OCI-LY7 (cell line): ENCODE measurements at regions of chr1 and their contacts with region 1.

Region 1: DNA sequence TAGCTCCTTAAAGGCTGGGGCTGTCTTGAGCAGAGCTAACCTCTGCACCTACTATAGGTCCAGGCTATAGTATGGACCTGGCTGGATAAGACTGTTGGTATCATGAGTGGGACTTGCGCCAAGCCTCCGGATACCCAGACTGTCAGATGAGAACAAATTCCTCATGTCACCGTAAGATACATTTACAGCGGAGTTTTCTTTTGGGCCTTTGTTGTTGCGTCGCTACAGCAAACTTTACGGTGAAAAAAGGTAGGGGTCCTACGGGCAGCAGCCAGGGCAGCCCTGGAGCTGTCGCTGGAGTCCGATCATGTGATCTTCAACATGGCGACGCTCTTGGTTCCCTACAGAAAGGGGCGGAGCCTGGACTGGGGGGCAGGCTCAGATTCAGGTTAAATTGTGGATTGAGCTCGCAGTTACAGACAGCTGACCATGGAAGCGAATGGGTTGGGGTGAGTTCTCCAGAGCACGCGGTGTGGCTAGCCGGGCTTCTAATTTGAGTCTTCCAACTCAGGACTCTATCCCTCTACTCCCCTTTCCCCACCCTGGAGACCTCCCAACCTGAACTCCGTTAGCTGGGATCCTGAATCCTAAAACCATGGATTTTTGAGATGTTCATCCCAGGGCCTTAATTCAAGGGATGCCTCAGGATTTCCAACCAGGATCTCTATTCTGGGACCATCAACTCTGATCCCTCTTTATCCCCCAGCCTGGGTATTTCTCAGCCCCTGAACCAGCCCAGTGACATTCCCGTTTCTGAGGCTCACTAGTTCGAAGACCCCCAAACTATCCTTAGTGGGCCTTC is at the start of gene UROD:
- DNase-seq: peak; percentile 97
- H3K4me3 ChIP-seq: peak within 1 kb of the TSS; percentile 83
- H3K27ac ChIP-seq: peak within 1 kb of the TSS; percentile 49
- H3K4me1 ChIP-seq: peaks cover 20% of the 10 kb centered on the region
- CTCF ChIP-seq: no peak
- total RNA-seq, gene UROD: 57.4 and 73.5 TPM in 2 replicates

Region 2: GRCh38 chr1:44792783-44793714 is 219.0 kb before region 1 on chr1:
- CTCF ChIA-PET with region 1: interaction called, 3 read pairs
- POLR2A ChIA-PET with region 1: interaction called, 4 read pairs
- intact Hi-C with region 1: loop called (anchors 2 kb)
- DNase-seq: no peak
- H3K4me3 ChIP-seq: no peak overlapping the region
- H3K27ac ChIP-seq: no peak overlapping the region
- H3K4me1 ChIP-seq: no peaks in the 10 kb centered on the region
- CTCF ChIP-seq: no peak

Region 3: GRCh38 chr1:44835738-44836675 is 176.0 kb before region 1 on chr1:
- CTCF ChIA-PET with region 1: no interaction called
- POLR2A ChIA-PET with region 1: no interaction called
- intact Hi-C with region 1: loop called (anchors 2 kb)
- DNase-seq: peak; percentile 77
- H3K4me3 ChIP-seq: no peak overlapping the region
- H3K27ac ChIP-seq: no peak overlapping the region
- H3K4me1 ChIP-seq: no peaks in the 10 kb centered on the region
- CTCF ChIP-seq: peak; percentile 94

Region 4: DNA sequence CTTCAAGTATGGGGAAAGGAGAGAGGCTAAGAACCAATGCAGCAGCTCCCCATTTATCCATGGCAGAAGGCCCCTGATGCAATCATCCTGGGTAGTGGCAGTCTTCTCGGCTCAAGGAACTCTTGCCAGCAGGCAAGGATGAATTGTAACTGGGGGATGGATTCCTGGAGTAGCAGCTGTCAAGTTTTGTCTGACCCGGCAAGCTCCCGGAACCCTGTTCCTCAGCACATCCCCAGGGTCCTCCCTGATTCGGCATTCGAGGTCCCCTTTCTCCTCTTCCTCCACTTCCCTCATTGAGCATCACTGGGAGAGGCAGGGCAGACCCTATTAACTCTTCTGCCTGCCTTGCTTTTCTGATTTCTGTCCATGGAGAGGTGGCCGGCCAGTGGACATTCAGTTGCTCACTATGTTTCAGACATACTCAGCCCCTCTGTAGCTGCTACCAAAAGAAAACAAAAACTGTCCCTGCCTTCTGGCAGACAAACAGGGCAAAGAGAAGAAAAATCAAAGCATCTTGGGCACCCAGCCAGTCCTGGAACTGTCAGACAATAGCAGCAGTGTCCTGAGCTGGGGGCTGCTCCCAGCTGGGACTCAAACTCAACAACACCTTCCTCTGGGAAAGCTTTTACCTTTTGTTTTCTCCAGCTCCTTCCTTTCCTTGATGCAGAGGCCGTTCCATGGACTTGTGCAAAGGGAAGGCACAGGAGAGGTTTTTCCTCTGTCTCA is 163.4 kb before region 1 on chr1:
- CTCF ChIA-PET with region 1: interaction called, 17 read pairs
- POLR2A ChIA-PET with region 1: no interaction called
- intact Hi-C with region 1: no loop called
- DNase-seq: no peak
- H3K4me3 ChIP-seq: no peak overlapping the region
- H3K27ac ChIP-seq: no peak overlapping the region
- H3K4me1 ChIP-seq: peaks cover 9% of the 10 kb centered on the region
- CTCF ChIP-seq: no peak

Region 5: DNA sequence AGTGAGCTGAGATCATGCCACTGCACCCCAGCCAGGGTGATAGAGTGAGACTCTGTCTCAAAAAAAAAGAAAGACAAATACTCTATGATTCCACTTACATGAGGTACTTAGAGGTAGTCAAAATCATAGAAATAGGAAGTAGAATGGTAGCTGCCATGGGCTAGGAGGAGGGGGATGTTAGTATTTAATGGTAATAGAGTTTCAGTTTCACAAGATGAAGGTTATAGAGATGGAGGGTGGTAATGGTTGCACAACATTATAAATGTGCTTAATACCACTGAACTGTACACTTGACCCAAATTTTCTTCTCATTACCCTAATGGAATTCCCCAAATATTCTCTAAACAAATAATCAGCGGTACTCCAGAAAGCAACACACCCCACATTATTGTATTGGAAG is 38.4 kb before region 1 on chr1:
- CTCF ChIA-PET with region 1: no interaction called
- POLR2A ChIA-PET with region 1: no interaction called
- intact Hi-C with region 1: no loop called
- DNase-seq: no peak
- H3K4me3 ChIP-seq: no peak overlapping the region
- H3K27ac ChIP-seq: no peak overlapping the region
- H3K4me1 ChIP-seq: no peaks in the 10 kb centered on the region
- CTCF ChIP-seq: no peak

Region 6: DNA sequence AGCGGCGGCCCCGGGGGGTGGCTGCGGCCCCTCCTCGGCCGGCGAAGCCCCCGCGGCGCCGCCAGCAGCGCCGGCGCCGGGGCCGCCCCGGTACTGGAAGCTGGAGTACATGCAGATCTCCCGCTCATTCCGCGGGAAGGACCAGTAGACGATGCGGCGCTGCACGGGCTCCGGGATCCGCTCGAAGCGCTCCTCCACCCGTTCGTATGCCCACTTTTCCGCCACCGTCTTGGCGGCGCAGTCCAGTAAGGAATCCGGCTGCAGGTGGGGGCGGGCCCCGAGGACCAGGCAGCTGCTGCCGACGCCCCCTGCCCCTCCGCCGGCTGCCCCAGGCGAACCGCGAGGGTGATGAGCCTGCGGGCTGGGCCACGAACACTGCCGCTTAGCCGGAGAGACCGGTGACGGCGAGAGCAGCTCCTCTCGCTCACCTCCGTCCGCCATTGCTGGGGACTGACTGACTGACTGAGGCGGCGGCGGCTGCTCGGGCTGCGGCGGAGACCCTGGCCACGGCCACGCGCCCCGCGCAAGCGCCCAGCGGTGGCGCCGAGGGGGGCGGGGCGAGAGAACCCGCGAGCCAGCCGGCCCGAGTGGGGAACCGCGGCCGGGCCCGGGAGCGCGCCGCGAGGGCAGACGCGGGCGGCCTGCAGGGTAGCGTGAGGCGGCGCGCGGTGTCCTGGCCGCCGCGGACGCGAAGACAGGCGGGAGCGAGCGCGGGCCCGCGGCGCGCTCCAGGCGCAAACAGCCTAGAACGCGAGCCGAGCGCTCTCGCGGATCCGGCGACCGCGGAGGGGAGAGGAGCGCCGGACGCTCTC is 194.1 kb after region 1 on chr1 and contains the start of gene ZSWIM5:
- CTCF ChIA-PET with region 1: no interaction called
- POLR2A ChIA-PET with region 1: no interaction called
- intact Hi-C with region 1: loop called (anchors 5 kb)
- DNase-seq: peak; percentile 74
- H3K4me3 ChIP-seq: peak within 1 kb of the TSS; percentile 76
- H3K27ac ChIP-seq: no peak within 1 kb of the TSS
- H3K4me1 ChIP-seq: peaks cover 8% of the 10 kb centered on the region
- CTCF ChIP-seq: no peak
- total RNA-seq, gene ZSWIM5: 0.13 and 0.28 TPM in 2 replicates

Region 7: DNA sequence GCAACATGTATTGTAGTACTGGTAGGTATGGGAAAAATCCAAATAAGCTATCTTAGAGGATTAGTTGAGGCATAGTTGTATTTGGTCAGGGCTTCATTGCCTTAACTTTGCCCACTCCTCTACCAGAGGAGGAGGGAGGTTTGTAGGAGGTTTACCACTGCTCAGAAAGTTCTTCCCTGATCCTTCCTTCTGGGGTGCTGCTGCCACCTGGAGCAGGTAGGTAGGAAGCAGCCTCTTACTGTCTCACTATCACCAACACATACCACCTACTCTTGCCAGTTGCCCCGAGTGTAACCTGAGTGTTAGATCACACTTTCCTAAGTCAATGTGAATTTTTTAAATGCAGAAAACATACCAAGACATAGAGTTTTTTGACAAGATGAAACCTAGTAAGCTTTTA is 218.5 kb after region 1 on chr1:
- CTCF ChIA-PET with region 1: no interaction called
- POLR2A ChIA-PET with region 1: no interaction called
- intact Hi-C with region 1: loop called (anchors 1 kb)
- DNase-seq: peak; percentile 11
- H3K4me3 ChIP-seq: no peak overlapping the region
- H3K27ac ChIP-seq: no peak overlapping the region
- H3K4me1 ChIP-seq: no peaks in the 10 kb centered on the region
- CTCF ChIP-seq: peak; percentile 49

Region 8: GRCh38 chr1:45490626-45491486 is 478.8 kb after region 1 on chr1 and contains the start of gene TESK2:
- CTCF ChIA-PET with region 1: interaction called, 3 read pairs
- POLR2A ChIA-PET with region 1: no interaction called
- intact Hi-C with region 1: loop called (anchors 1 kb)
- DNase-seq: peak; percentile 100
- H3K4me3 ChIP-seq: peak within 1 kb of the TSS; percentile 75
- H3K27ac ChIP-seq: peak within 1 kb of the TSS; percentile 15
- H3K4me1 ChIP-seq: peaks cover 32% of the 10 kb centered on the region
- CTCF ChIP-seq: no peak
- total RNA-seq, gene TESK2: 4.9 and 5.0 TPM in 2 replicates